ENCODE measurements at regions of chr21 and their contacts with region 1.

Region 1: DNA sequence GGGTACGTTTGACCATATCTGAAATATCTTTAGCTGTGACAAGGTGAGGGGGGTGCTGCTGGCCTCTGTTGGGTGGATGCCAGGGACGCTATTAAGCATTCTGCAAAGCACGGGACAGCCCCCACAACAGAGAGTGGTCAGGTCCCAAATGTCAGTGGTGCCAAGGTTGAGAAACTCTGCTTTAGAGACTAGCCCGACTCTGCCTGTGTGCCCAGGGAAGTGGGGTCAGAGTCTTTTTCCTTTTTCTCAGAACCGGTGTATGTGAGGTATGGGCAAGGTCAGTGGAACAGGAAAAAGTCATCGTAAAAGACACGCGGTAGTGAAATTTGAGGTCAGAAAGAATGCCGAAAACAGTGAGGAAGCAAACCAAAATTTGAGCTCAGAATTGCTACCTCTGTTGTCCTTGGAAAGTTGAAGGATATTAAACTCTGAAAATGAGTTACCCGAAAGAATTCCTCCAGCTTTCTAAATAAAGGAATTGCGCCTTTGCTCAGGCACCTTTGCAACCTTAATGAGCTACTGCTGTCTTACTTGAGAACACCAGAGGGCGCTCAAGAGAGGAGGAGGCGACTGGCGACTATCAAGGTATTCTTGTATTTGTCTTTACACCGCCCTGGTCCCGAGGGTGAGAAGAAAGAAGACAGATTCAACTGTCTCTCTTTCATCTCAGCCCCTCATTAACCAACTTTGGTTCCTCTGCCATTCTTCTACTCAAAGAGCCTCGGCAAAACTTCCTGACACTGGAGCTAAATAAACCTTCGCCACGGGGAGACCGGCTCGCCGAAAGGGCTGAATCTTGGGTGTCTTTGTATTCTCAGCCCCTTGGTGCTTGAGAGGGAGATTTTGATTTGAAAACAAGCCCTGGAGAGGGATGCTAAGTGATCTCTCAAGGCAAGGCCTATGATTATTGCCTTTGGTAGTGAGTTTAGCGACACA is 85.4 kb upstream of the OLIG2 start:
- DNase-seq: peak; percentile 47
- CTCF ChIP-seq: peak; percentile 66

Region 2: DNA sequence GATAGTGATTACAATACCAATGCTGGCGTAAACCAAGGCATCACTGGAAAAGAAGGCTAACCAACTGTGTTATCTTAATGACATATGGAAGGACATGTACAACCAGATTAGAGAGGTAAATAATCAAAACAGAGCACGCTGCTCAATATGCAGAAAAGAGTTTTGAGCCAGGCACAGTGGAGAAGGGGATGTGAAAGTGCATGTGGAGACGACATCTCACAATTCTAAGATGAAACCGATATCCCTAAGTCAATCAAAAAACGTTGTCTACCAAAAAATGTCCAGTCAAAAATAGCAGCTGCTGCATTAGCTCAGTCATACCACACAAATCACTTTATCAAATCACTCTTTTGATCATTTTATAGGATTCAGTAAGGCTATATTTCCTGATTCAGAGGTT is 31.0 kb before region 1 on chr21:
- CTCF ChIA-PET with region 1: interaction called, 16 read pairs
- POLR2A ChIA-PET with region 1: no interaction called
- DNase-seq: no peak
- CTCF ChIP-seq: no peak

Region 3: DNA sequence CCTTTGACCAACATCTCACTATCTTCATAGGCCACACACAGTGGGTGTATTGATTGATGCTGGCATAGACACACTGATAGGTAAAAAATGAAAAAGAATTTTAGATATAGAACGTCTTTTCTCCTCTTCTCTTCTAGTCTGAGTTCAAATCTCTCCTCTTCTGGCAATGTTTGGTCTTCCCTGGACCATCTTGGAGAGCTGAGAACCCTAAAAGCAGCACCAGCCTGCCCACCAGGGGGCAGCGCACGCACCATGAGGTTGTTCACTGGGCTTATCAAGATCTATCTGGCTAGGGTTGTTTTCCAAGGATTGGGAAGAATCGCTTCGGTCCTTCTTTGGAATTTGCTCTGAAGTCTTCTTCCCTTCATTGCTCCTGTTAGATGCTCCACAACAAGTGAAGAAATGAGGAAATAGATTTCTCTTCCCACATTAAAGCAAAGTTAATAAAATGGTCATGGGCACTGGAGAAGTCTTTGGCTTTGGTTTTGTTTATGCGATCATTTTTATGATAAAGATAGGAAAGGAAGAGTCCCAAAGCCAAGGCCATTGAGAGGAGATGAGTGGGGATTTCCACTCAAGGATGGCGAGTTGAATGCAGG is 18.6 kb before region 1 on chr21:
- CTCF ChIA-PET with region 1: interaction called, 29 read pairs
- POLR2A ChIA-PET with region 1: no interaction called
- DNase-seq: peak; percentile 29
- CTCF ChIP-seq: peak; percentile 60

Region 4: DNA sequence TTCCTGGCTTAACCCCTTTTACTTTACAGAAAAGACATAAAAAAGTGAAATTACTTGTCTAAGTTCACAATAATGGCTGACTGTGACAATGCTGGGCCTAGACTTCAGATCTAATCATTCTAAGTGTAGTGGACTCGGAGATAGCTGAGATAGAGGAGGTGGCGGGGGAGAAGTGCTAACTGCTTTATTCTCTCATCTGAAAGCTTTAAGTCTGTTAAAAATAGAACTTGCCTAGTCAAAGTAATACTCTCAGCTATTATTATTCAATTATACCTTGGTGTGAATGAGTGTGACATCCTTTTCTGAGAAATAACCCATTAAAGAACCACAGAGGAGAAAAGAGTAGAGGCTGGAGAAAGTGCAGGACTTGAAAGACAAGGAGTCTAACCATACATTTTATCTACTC is 10.7 kb before region 1 on chr21:
- CTCF ChIA-PET with region 1: interaction called, 39 read pairs
- POLR2A ChIA-PET with region 1: no interaction called
- DNase-seq: peak; percentile 59
- CTCF ChIP-seq: no peak

Region 5: GRCh38 chr21:32974653-32975052 is 34.3 kb after region 1 on chr21:
- CTCF ChIA-PET with region 1: interaction called, 11 read pairs
- POLR2A ChIA-PET with region 1: interaction called, 5 read pairs
- DNase-seq: no peak
- CTCF ChIP-seq: no peak

Region 6: DNA sequence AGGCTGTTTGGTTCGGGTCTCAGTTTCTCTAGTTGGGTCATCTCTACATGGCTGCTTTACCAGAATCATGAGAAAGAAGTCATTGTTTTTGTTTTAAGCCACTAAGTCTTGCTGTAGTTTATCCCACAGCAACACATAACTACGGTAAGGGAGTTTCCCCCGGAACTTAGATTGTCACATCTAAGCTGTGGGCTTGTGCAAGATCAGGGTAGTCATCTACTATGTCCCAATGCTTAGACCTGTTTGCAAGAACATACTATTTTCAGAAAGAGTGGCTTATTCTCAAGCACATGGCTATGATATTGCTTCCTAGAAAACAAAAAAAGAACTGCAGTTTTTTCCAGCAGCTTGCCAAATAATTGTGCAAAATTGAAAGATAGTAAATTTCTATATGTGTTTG is 67.4 kb after region 1 on chr21:
- CTCF ChIA-PET with region 1: no interaction called
- POLR2A ChIA-PET with region 1: no interaction called
- DNase-seq: no peak
- CTCF ChIP-seq: no peak

Region 7: GRCh38 chr21:33127154-33127893 is 187.0 kb after region 1 on chr21:
- CTCF ChIA-PET with region 1: interaction called, 23 read pairs
- POLR2A ChIA-PET with region 1: no interaction called
- DNase-seq: peak; percentile 73
- CTCF ChIP-seq: peak; percentile 72

Region 8: DNA sequence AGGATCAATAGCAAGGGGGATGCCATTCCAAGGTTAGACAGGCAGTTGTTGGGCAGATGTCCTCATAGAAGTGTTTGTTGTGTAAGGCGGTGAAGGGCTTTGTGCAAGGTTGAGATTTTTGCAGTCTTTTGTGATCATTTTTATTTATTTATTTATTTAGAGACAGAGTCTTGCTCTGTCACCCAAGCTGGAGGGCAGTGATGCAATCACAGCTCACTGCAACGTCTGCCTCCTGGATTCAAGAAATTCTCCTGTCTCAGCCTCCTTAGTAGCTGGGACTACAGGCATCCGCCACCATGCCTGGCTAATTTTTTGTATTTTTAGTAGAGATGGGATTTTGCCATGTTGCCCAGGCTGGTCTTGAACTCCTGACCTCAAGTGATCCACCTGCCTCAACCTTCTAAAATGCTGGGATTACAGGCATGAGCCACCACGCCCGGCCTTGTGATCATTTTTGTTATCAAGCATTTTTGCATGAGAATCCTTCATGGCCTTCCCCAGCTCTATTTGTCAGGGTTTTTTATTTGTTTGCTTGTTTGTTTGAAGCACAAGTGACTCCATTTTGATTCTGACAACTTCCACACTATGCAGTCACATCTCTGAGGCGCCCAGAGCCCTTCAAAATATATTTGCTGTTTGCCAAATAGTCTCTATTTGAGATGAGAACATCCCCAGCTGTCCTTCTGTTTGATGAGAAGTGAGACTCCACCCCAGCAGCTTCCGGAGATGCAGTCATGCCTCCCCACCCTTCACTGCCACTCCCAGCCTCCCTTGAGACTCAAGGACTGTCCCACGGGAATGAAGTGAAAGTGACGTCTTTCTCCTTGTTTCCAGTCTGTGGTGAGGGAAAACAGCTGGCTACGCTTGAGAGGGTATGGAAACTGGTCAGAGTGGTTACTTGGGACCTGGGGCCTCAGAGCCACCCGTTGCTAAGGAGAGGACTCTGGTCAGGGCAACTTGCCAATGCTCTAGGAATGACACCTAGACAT is 501.4 kb after region 1 on chr21:
- CTCF ChIA-PET with region 1: interaction called, 13 read pairs
- POLR2A ChIA-PET with region 1: no interaction called
- DNase-seq: peak; percentile 73
- CTCF ChIP-seq: no peak

Region 9: DNA sequence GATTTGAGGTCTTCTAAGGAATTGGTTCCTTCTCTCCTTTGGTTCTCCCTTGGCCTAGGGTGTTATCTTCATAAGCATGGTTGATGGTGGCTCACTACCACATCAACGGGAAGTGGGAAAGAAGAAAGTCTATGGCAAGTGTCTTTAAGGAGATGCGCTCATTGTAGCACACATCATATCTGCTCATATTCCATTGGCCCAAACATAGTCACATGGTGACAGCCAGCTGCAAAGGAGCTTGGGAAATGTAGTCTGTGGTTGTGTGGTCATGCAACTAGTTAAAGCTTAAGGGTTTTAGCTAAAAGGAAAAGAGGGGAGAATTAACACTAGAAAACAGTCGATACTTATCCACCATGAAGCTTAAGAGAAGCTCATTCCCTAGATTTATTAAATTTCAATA is 1121.6 kb after region 1 on chr21:
- CTCF ChIA-PET with region 1: no interaction called
- POLR2A ChIA-PET with region 1: no interaction called
- DNase-seq: no peak
- CTCF ChIP-seq: no peak

Measured in GM10248 (cell line).